Activated CD8-positive, alpha-beta T cell treated with anti-CD3 and anti-CD28 coated beads, Interleukin-2, amount 10 ng/mL, durations not matched to agents 7 days and 5 days (primary cell): ENCODE measurements at regions of chr19 and their contacts with region 1.

Region 1: GRCh38 chr19:4636151-4636717 is 3.1 kb upstream of the TNFAIP8L1 start:
- DNase-seq: peak; percentile 79
- ATAC-seq: peak; percentile 25
- H3K4me3 Mint-ChIP-seq: peak overlapping the region; percentile 42
- H3K27ac Mint-ChIP-seq: peak overlapping the region; percentile 30
- H3K4me1 Mint-ChIP-seq: peaks cover 54% of the 10 kb centered on the region
- H3K27me3 Mint-ChIP-seq: no peaks in the 10 kb centered on the region

Region 2: GRCh38 chr19:4524808-4525562 is 111.2 kb before region 1 on chr19:
- CTCF ChIA-PET with region 1: interaction called, 18 read pairs
- POLR2A ChIA-PET with region 1: no interaction called
- DNase-seq: peak; percentile 76
- ATAC-seq: peak; percentile 72
- H3K4me3 Mint-ChIP-seq: no peak overlapping the region
- H3K27ac Mint-ChIP-seq: no peak overlapping the region
- H3K4me1 Mint-ChIP-seq: no peaks in the 10 kb centered on the region
- H3K27me3 Mint-ChIP-seq: no peaks in the 10 kb centered on the region

Region 3: GRCh38 chr19:4567584-4568071 is 68.6 kb before region 1 on chr19:
- CTCF ChIA-PET with region 1: interaction called, 71 read pairs
- POLR2A ChIA-PET with region 1: interaction called, 3 read pairs
- DNase-seq: peak; percentile 68
- ATAC-seq: peak; percentile 65
- H3K4me3 Mint-ChIP-seq: no peak overlapping the region
- H3K27ac Mint-ChIP-seq: no peak overlapping the region
- H3K4me1 Mint-ChIP-seq: no peaks in the 10 kb centered on the region
- H3K27me3 Mint-ChIP-seq: no peaks in the 10 kb centered on the region

Region 4: DNA sequence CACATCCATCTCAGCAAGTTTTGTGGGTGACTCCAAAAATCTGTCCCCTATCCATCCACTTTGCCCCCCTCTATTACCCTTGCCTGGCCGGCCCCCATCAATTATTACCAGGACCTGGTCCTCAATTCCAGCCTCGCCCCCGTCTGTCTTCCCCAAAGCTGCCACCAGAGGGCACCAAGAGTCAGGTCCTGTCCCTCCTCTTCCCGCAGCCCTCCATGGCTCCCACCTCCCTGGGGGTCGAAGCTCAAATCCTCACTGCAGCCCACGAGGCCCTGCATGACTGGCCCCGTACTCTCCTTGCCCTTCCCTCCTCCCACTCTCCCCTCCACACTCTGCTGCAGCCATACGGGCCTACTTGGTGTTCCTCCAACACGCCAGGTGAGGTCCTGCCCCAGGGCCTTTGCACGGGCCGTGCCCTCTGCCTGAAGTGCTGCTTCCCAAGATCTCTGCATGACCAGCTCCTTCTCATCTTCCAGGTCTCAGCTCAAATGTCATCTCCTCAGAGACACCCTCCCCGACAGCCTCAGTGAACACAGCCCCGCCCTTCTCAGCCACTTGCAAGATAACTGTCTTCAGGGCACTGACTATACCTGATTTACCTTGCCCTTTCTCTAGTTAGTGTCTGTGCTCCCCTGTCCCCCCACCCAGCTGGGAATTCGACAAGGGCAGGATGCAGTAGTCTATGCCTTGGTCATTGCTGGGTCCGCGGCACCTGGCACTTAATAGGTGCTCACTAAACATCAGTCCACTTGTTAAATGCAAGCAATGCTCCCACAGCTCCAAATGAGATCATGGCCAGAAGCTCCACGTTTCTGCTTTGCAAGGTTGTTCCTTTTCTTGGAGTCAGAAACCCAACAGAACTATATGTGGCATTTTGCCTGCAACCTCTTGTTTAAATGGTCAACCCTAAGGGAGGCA is 60.0 kb before region 1 on chr19:
- CTCF ChIA-PET with region 1: interaction called, 71 read pairs
- POLR2A ChIA-PET with region 1: no interaction called
- DNase-seq: peak; percentile 77
- ATAC-seq: peak; percentile 56
- H3K4me3 Mint-ChIP-seq: no peak overlapping the region
- H3K27ac Mint-ChIP-seq: no peak overlapping the region
- H3K4me1 Mint-ChIP-seq: peaks cover 3% of the 10 kb centered on the region
- H3K27me3 Mint-ChIP-seq: peaks cover 31% of the 10 kb centered on the region

Region 5: GRCh38 chr19:4589579-4590410 is 46.4 kb before region 1 on chr19:
- CTCF ChIA-PET with region 1: interaction called, 17 read pairs
- POLR2A ChIA-PET with region 1: interaction called, 3 read pairs
- DNase-seq: peak; percentile 48
- ATAC-seq: peak; percentile 58
- H3K4me3 Mint-ChIP-seq: no peak overlapping the region
- H3K27ac Mint-ChIP-seq: no peak overlapping the region
- H3K4me1 Mint-ChIP-seq: no peaks in the 10 kb centered on the region
- H3K27me3 Mint-ChIP-seq: peaks cover 28% of the 10 kb centered on the region

Region 6: DNA sequence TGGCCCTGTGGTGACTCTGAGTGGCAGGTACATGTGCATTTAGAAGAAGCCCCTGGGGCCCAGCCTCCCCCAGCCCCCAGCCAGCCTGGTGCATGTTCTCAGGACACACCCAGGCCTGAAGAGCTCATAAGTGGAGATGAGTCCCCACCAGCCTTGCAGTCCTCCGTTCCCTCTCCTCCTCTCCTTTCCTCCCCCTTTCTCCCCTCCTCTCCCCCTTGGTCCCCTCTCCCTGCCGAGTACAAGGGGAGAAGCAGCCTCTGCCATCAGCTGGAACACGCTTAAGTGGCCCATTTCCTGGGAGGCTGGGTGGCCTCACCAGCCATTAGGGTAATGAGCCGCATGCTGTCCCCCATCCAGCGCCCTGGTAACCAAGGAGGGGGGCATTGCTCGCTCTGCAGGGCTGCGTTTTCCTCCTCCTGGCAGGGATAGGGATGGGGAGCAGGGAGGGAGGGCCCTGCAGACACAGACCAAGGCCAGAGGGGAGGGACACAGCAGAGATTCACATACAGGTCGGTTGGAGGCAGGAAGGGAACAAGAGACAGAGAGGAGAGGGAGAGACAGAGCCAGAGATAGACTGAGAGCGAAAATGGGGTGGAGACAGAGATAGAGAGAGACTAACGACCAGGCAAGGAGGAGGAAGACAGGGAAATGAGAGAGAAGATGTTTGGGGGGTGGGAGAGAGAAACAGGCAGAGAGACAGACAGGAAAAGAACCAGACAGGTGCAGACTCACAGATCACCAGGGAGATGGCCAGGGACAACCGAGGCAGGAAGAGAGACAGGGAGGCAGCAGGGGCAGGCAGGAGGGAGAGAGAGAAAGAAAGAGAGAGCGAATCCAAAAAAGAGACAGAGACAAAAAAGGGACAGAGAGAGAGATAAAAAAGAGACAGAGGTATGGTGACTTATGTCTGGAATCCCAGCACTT is 106.8 kb after region 1 on chr19:
- CTCF ChIA-PET with region 1: no interaction called
- POLR2A ChIA-PET with region 1: no interaction called
- DNase-seq: no peak
- ATAC-seq: no peak
- H3K4me3 Mint-ChIP-seq: no peak overlapping the region
- H3K27ac Mint-ChIP-seq: no peak overlapping the region
- H3K4me1 Mint-ChIP-seq: no peaks in the 10 kb centered on the region
- H3K27me3 Mint-ChIP-seq: peaks cover 19% of the 10 kb centered on the region